Caco-2 (cell line): ENCODE measurements at regions of chr1 and their contacts with region 1.

Region 1: GRCh38 chr1:77888081-77888780 is at the start of gene NEXN:
- DNase-seq: peak; percentile 49 to 55
- H3K4me3 ChIP-seq: peak within 1 kb of the TSS; percentile 53
- H3K4me3 Mint-ChIP-seq: peak within 1 kb of the TSS; percentile 77
- H3K27ac Mint-ChIP-seq: peak within 1 kb of the TSS; percentile 62
- H3K4me1 ChIP-seq: no peaks in the 10 kb centered on the region
- H3K4me1 Mint-ChIP-seq: no peaks in the 10 kb centered on the region
- H3K27me3 ChIP-seq: no peaks in the 10 kb centered on the region
- H3K27me3 Mint-ChIP-seq: no peaks in the 10 kb centered on the region
- CTCF ChIP-seq: no peak
- total RNA-seq, gene NEXN: 1.1 and 1.9 TPM in 2 replicates

Region 2: GRCh38 chr1:77768006-77768405 is 120.2 kb before region 1 on chr1:
- CTCF ChIA-PET with region 1: interaction called, 10 read pairs
- POLR2A ChIA-PET with region 1: no interaction called
- intact Hi-C with region 1: no loop called
- DNase-seq: no peak
- H3K4me3 ChIP-seq: no peak overlapping the region
- H3K4me3 Mint-ChIP-seq: no peak overlapping the region
- H3K27ac Mint-ChIP-seq: no peak overlapping the region
- H3K4me1 ChIP-seq: no peaks in the 10 kb centered on the region
- H3K4me1 Mint-ChIP-seq: no peaks in the 10 kb centered on the region
- H3K27me3 ChIP-seq: no peaks in the 10 kb centered on the region
- H3K27me3 Mint-ChIP-seq: no peaks in the 10 kb centered on the region
- CTCF ChIP-seq: no peak

Region 3: DNA sequence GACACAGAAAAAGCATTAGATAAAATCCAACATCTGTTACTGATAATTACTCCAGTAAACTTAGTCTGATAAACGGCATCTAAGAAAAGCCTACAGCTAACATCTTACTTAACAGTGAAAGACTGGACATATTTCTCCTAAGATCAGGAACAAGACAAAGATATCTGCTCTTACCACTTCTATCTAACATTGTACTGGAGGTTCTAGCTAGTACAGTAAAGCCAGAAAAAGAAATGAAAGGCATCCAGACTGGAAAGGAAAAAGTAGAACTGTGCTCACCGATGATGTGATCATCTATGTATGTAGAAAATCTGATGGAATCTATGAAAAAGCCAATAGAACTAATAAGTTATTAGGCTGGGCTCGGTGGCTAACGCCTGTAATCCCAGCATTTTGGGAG is 21.9 kb after region 1 on chr1:
- CTCF ChIA-PET with region 1: no interaction called
- POLR2A ChIA-PET with region 1: no interaction called
- intact Hi-C with region 1: no loop called
- DNase-seq: no peak
- H3K4me3 ChIP-seq: no peak overlapping the region
- H3K4me3 Mint-ChIP-seq: no peak overlapping the region
- H3K27ac Mint-ChIP-seq: no peak overlapping the region
- H3K4me1 ChIP-seq: no peaks in the 10 kb centered on the region
- H3K4me1 Mint-ChIP-seq: no peaks in the 10 kb centered on the region
- H3K27me3 ChIP-seq: no peaks in the 10 kb centered on the region
- H3K27me3 Mint-ChIP-seq: no peaks in the 10 kb centered on the region
- CTCF ChIP-seq: no peak